ENCODE measurements at regions of chr6 and their contacts with region 1.

Region 1: DNA sequence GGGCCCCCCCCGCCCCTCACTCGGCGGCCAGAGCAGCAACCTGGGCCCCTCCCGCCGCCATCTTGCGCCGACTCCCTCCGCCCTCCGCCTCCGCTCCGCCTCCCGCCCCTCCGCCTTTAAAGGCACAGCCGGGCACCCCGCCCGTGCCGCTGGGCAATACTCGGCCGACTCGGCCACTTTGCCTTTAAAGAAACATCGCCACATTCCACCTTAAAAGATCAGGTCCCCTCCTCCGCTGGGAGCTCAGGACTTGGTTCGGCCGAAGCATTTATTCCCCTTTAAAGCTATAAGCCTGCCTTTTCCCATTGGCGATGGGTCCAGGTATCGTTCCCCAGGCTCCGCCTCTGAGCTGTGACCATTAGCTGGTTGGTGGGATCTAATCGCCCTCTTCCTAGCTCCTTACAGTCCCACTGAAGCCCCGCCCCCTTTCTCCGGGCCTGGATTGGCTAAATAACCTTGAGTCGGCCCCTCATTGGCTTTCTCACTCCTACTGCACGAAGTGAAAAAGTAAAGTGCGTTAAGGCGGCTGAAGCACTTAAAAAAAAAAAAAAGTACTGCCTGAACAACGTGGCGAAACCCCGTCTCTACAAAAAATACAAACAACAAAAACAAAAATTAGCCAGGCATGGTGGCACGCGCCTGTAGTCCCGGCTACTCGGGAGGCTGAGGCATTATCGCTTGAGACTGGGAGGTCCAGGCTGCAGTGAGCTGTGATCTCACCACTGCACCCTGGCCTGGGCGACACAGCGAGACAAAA is at the start of gene ZBTB22:
- H3K4me3 ChIP-seq: peak within 1 kb of the TSS; percentile 58
- H3K27ac ChIP-seq: peak within 1 kb of the TSS; percentile 35
- H3K4me1 ChIP-seq: peaks cover 25% of the 10 kb centered on the region
- CTCF ChIP-seq: no peak

Region 2: DNA sequence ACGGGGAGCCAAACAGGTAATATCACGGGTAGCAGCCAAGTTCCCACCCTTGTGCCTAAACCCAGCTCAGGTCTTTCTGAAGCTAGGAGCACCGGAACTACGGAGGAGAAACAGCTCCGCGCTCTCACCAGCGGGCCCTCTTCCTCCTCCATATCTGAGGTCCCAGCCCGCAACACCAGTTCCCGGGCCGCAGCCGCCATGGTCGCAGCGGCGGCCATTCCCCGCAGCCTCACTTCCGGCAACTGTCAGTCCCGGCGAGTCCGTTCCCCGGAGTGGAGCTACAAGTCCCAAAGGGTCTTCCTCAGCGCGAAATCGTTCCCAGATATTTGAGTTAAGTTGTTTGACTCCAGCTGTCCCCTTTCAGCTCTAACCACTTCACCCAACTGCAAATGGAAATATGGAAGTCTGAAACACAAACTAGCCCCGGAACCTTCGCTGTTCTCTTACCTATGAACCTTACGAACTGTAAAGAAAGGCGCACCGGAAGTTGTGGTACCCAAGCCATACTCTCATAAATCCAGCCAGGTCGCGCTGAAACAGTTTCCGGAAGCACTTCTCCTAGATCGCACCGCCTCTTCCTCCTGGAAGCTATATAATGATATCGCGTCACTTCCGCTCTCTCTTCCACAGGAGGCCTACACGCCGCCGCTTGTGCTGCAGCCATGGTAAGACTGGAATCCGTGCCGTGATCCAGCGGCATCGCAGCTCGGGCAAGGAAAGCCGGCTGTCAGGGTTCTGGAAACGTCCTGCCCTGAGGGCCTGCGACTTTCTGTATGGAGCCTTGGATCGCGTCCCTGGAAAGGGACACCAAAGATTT is 46.2 kb before region 1 on chr6 and contains the starts of genes RPS18 and VPS52:
- CTCF ChIA-PET with region 1: interaction called, 11 read pairs
- POLR2A ChIA-PET with region 1: interaction called, 26 read pairs
- H3K4me3 ChIP-seq: peak within 1 kb of the TSS; percentile 77
- H3K27ac ChIP-seq: peak within 1 kb of the TSS; percentile 99
- H3K4me1 ChIP-seq: peaks cover 27% of the 10 kb centered on the region
- CTCF ChIP-seq: peak; percentile 49; the same call in 1 of the 2 replicates

Region 3: GRCh38 chr6:33288921-33289748 is 28.7 kb before region 1 on chr6 and contains the starts of genes PFDN6 and WDR46:
- CTCF ChIA-PET with region 1: interaction called, 9 read pairs
- POLR2A ChIA-PET with region 1: interaction called, 15 read pairs
- H3K4me3 ChIP-seq: peak within 1 kb of the TSS; percentile 79
- H3K27ac ChIP-seq: peak within 1 kb of the TSS; percentile 44
- H3K4me1 ChIP-seq: peaks cover 11% of the 10 kb centered on the region; the same call in 1 of the 2 replicates
- CTCF ChIP-seq: no peak

Region 4: GRCh38 chr6:33344701-33345697 is 27.2 kb after region 1 on chr6:
- CTCF ChIA-PET with region 1: interaction called, 10 read pairs
- POLR2A ChIA-PET with region 1: interaction called, 22 read pairs
- H3K4me3 ChIP-seq: no peak overlapping the region
- H3K27ac ChIP-seq: no peak overlapping the region
- H3K4me1 ChIP-seq: peaks cover 4% of the 10 kb centered on the region
- CTCF ChIP-seq: peak; percentile 19; the same call in 1 of the 2 replicates

Region 5: GRCh38 chr6:33391278-33391921 is 73.6 kb after region 1 on chr6 and contains the start of gene KIFC1:
- CTCF ChIA-PET with region 1: interaction called, 21 read pairs
- POLR2A ChIA-PET with region 1: interaction called, 4 read pairs
- H3K4me3 ChIP-seq: peak within 1 kb of the TSS; percentile 82
- H3K27ac ChIP-seq: peak within 1 kb of the TSS; percentile 80
- H3K4me1 ChIP-seq: peaks cover 10% of the 10 kb centered on the region
- CTCF ChIP-seq: peak; percentile 100

Region 6: DNA sequence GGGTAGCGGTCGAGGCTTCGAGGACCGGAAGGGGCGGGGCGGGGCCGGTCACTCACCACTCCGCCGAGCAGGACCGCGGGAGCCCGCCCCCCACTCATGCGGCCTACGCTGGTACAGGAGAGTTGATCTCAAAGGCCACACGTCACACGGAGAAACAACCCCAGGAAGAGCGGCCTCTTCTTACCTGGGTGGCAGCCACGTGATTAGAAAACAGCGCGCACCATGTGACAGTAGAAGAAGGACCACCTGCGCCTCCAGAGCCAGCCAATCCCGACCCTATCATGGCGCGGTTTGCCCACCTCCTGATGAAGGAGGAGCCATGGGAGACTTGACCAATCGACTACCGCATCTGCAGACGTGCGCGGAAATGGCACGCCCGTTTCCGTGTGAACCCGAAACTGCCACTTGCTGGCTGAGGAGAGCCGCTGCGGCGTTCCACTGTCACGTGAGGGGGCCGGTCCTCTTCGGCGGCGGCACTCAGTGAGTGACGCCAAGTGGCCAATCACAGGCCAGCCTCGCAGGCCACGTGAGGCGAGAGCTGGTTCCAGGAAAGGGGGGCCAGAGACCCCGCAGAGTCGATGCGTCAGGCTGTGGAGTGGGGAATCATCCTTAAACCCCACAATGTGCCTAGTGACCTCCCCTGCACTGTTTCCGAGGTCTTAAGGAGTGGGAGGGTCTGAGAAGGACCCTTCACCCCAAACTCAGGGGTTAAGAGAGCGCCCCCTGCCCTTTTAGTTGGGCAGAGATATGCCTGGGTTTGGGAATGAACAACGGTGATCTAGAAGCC is 100.2 kb after region 1 on chr6 and contains the start of gene CUTA:
- CTCF ChIA-PET with region 1: no interaction called
- POLR2A ChIA-PET with region 1: interaction called, 16 read pairs
- H3K4me3 ChIP-seq: peak within 1 kb of the TSS; percentile 46
- H3K27ac ChIP-seq: peak within 1 kb of the TSS; percentile 67
- H3K4me1 ChIP-seq: no peaks in the 10 kb centered on the region
- CTCF ChIP-seq: peak; percentile 90

Measured in HEK293 (cell line).